Activated CD8-positive, alpha-beta T cell treated with anti-CD3 and anti-CD28 coated beads for 36 hours (primary cell): ENCODE measurements at regions of chr12 and their contacts with region 1.

Region 1: DNA sequence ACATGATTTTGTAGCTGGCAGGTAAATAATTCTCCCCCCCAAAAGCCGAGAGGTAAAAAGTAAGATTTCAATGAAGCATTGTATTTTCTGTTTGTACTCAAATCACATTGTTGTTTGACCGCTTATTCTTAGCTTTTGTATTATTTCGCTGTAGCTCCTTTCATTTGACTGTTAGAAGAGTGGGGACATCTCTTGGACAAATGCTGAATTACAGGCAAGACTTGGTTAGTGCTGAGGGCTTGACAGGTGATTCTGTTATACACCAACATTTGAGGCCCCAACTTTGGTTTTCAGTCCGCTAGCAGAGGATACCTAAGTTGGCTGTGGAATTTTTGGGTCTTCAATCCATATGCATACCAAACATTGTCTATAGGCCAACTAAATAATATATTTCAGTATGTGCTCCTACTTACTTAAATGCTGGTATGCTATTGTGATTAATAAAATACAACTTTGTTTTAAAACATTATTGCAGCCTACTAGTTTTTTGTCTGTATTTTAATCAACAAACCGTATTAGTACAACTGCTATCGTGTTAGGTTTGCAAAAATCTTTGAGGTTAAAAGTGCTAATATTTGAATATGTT is 102.2 kb downstream of the ERC1 start:
- DNase-seq: peak; percentile 51
- ATAC-seq: peak; percentile 93
- H3K4me3 Mint-ChIP-seq: no peak overlapping the region
- H3K27ac Mint-ChIP-seq: no peak overlapping the region
- H3K4me1 Mint-ChIP-seq: peaks cover 19% of the 10 kb centered on the region
- H3K27me3 Mint-ChIP-seq: no peaks in the 10 kb centered on the region
- CTCF ChIP-seq: peak; percentile 87

Region 2: GRCh38 chr12:949453-950191 is 143.6 kb before region 1 on chr12 and contains the start of gene RAD52:
- CTCF ChIA-PET with region 1: interaction called, 16 read pairs
- POLR2A ChIA-PET with region 1: no interaction called
- intact Hi-C with region 1: no loop called
- DNase-seq: peak; percentile 99
- ATAC-seq: peak; percentile 87
- H3K4me3 Mint-ChIP-seq: peak within 1 kb of the TSS; percentile 98
- H3K27ac Mint-ChIP-seq: peak within 1 kb of the TSS; percentile 96
- H3K4me1 Mint-ChIP-seq: peaks cover 23% of the 10 kb centered on the region
- H3K27me3 Mint-ChIP-seq: no peaks in the 10 kb centered on the region
- CTCF ChIP-seq: peak; percentile 95
- total RNA-seq, gene RAD52: 14.9 to 16.3 TPM

Region 3: DNA sequence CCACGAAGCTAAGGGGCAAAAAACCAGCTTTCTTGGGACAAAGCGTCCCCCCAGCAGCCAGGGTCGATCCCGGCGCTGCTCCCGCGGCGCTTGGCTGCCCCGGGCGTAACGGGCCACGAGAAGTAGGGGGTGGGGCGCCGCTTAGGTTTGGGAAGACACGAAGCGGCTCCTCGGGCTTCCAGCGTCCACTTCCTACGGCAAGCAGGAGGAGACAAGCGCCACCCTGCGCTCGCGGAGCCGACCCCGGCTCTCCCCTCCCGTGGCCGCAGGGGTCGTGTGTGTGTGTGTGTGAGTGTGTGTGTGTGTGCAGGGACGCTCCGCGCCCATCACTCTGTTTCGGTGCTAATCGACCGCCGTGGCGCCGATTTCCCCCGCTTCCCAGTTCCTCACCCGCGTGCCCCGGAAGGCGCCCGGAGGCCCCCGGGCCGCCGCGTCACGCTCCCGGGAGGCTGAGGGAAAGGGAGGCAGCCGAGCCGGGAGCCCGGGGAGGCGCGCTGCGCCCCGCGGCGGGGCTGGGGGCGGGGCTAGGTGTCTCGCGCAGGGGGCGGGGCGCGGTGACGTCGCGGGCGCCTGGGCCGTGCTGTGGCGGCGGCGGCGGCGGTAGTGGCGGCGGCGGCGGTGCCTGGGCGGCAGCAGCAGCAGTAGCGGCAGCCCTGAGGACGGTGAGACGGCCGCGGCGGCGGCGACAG is 102.5 kb before region 1 on chr12 and contains the start of gene ERC1:
- CTCF ChIA-PET with region 1: interaction called, 6 read pairs
- POLR2A ChIA-PET with region 1: no interaction called
- intact Hi-C with region 1: loop called (anchors 10 kb)
- DNase-seq: peak; percentile 80
- ATAC-seq: peak; percentile 86
- H3K4me3 Mint-ChIP-seq: peak within 1 kb of the TSS; percentile 85
- H3K27ac Mint-ChIP-seq: peak within 1 kb of the TSS; percentile 91
- H3K4me1 Mint-ChIP-seq: peaks cover 43% of the 10 kb centered on the region
- H3K27me3 Mint-ChIP-seq: no peaks in the 10 kb centered on the region
- CTCF ChIP-seq: no peak
- total RNA-seq, gene ERC1: 21.7 to 27.0 TPM

Region 4: DNA sequence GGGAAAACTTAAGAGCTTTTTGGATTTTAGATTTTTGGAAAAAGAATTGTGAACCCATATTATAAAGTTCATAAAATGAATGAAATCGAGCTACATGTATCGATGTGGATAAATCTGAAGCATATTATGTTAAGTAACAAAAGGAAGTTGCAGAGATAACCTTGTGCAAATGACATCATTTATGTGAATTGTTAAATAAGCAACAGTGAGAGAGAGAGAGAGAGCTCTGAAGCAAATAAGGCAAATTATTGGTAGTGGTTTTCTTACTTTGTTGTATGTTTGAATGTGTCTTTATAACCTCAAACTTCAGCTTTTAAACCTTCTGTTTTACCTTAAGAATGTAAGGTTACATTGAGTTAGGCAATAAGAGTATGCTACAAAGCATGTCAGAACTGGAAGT is 23.4 kb before region 1 on chr12:
- CTCF ChIA-PET with region 1: interaction called, 13 read pairs
- POLR2A ChIA-PET with region 1: no interaction called
- intact Hi-C with region 1: no loop called
- DNase-seq: no peak
- ATAC-seq: no peak
- H3K4me3 Mint-ChIP-seq: no peak overlapping the region
- H3K27ac Mint-ChIP-seq: no peak overlapping the region
- H3K4me1 Mint-ChIP-seq: peaks cover 9% of the 10 kb centered on the region
- H3K27me3 Mint-ChIP-seq: no peaks in the 10 kb centered on the region
- CTCF ChIP-seq: no peak

Region 5: DNA sequence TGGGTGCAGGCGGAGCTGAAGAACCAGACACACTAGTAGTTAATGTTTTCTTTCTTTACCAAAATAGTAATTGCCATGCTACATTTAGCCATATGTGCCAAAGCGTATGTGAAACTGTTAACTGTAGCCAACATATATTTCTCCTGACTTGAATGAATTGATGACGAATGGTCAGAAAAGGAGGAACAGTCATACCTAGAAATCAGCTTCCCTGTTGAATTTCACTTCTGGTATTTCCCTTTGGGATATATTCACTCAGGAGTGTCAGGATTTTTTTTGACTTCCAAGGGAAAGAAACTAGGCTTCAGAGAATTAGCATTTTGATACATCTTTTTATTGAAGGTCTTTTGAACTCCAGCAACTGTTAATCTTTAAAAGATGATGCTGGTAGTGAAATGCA is 15.3 kb before region 1 on chr12:
- CTCF ChIA-PET with region 1: interaction called, 24 read pairs
- POLR2A ChIA-PET with region 1: no interaction called
- intact Hi-C with region 1: no loop called
- DNase-seq: no peak
- ATAC-seq: no peak
- H3K4me3 Mint-ChIP-seq: no peak overlapping the region
- H3K27ac Mint-ChIP-seq: no peak overlapping the region
- H3K4me1 Mint-ChIP-seq: peaks cover 16% of the 10 kb centered on the region
- H3K27me3 Mint-ChIP-seq: no peaks in the 10 kb centered on the region
- CTCF ChIP-seq: no peak

Region 6: GRCh38 chr12:1108276-1108675 is 15.0 kb after region 1 on chr12:
- CTCF ChIA-PET with region 1: interaction called, 13 read pairs
- POLR2A ChIA-PET with region 1: interaction called, 3 read pairs
- intact Hi-C with region 1: no loop called
- DNase-seq: no peak
- ATAC-seq: peak; percentile 90
- H3K4me3 Mint-ChIP-seq: no peak overlapping the region
- H3K27ac Mint-ChIP-seq: no peak overlapping the region
- H3K4me1 Mint-ChIP-seq: peaks cover 28% of the 10 kb centered on the region
- H3K27me3 Mint-ChIP-seq: no peaks in the 10 kb centered on the region
- CTCF ChIP-seq: no peak